ENCODE measurements at regions of chr2 and their contacts with region 1.

Region 1: GRCh38 chr2:54570925-54571694 is 115.0 kb downstream of the SPTBN1 start:
- DNase-seq: peak; percentile 83
- ATAC-seq: peak; percentile 42
- H3K4me3 ChIP-seq: peak overlapping the region in 3 of 5 experiments; percentile 1 to 56 (median 32)
- H3K4me3 Mint-ChIP-seq: peak overlapping the region; percentile 83
- H3K27ac ChIP-seq: peak overlapping the region; percentile 92 to 93
- H3K27ac Mint-ChIP-seq: peak overlapping the region; percentile 97
- H3K4me1 ChIP-seq: peaks cover 92 to 93% of the 10 kb centered on the region in 2 donors
- H3K4me1 Mint-ChIP-seq: peaks cover 92% of the 10 kb centered on the region
- H3K27me3 ChIP-seq: no peaks in the 10 kb centered on the region
- H3K27me3 Mint-ChIP-seq: no peaks in the 10 kb centered on the region
- CTCF ChIP-seq: no peak

Region 2: GRCh38 chr2:54589340-54590215 is 18.5 kb after region 1 on chr2:
- CTCF ChIA-PET with region 1: interaction called, 4 read pairs
- POLR2A ChIA-PET with region 1: interaction called, 5 read pairs
- intact Hi-C with region 1: loop called (anchors 2 kb)
- DNase-seq: no peak
- ATAC-seq: peak; percentile 57
- H3K4me3 ChIP-seq: peak overlapping the region in 3 of 5 experiments; percentile 15 to 38 (median 16)
- H3K4me3 Mint-ChIP-seq: peak overlapping the region; percentile 69
- H3K27ac ChIP-seq: peak overlapping the region; percentile 59 to 67
- H3K27ac Mint-ChIP-seq: peak overlapping the region; percentile 88
- H3K4me1 ChIP-seq: peaks cover 87% of the 10 kb centered on the region in 2 donors
- H3K4me1 Mint-ChIP-seq: peaks cover 94% of the 10 kb centered on the region
- H3K27me3 ChIP-seq: no peaks in the 10 kb centered on the region
- H3K27me3 Mint-ChIP-seq: no peaks in the 10 kb centered on the region
- CTCF ChIP-seq: no peak

Region 3: DNA sequence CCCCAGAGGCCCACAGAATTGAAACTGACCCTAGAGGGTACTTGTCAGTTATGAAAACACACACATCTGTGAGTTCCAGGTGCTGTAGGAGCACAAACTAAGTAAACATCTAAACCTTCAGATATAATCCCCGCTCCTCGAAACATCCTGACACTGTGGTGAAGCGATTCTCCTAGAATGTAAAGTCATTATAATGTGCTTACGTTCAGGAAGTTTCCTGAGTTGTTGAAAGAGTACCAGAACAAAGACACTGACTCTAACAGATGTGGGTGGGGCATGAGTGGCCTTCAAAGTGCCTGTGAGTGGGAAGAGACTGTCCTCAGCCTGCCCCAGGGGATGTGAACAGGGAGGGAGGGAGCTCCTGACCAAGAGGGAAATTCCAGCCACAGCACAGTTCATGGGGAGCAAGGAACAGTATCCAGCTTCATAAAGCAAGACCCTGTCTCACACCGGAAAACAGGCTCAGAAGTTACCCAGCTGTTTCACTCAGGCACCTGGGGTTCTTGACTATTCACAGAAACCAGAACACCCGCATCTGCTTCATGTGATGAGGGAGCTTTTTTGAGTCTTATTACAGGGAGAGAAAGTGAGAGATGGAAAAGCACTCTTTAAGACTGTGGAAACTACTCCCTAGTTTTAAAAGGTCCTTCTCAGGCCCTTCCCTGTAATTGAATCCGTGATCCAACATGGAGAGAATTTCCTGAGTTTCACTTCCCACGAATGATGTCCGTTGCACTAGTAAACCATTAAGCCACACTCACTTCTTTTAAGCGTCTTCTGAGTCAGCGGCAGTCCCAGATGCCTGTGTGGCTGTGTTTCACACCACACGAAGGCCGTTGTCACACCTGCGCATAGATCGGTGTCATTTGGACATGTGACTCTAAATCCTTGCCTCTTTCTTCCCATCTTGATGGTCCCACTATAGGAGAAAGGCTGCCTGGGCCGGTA is 63.7 kb after region 1 on chr2:
- CTCF ChIA-PET with region 1: interaction called, 7 read pairs
- POLR2A ChIA-PET with region 1: no interaction called
- intact Hi-C with region 1: loop called (anchors 2 kb)
- DNase-seq: peak; percentile 68
- ATAC-seq: peak; percentile 65
- H3K4me3 ChIP-seq: no peak overlapping the region
- H3K4me3 Mint-ChIP-seq: peak overlapping the region; percentile 67
- H3K27ac ChIP-seq: peak overlapping the region; percentile 46 to 85
- H3K27ac Mint-ChIP-seq: peak overlapping the region; percentile 94
- H3K4me1 ChIP-seq: peaks cover 35 to 42% of the 10 kb centered on the region in 2 donors
- H3K4me1 Mint-ChIP-seq: peaks cover 60% of the 10 kb centered on the region
- H3K27me3 ChIP-seq: no peaks in the 10 kb centered on the region
- H3K27me3 Mint-ChIP-seq: no peaks in the 10 kb centered on the region
- CTCF ChIP-seq: no peak

Region 4: DNA sequence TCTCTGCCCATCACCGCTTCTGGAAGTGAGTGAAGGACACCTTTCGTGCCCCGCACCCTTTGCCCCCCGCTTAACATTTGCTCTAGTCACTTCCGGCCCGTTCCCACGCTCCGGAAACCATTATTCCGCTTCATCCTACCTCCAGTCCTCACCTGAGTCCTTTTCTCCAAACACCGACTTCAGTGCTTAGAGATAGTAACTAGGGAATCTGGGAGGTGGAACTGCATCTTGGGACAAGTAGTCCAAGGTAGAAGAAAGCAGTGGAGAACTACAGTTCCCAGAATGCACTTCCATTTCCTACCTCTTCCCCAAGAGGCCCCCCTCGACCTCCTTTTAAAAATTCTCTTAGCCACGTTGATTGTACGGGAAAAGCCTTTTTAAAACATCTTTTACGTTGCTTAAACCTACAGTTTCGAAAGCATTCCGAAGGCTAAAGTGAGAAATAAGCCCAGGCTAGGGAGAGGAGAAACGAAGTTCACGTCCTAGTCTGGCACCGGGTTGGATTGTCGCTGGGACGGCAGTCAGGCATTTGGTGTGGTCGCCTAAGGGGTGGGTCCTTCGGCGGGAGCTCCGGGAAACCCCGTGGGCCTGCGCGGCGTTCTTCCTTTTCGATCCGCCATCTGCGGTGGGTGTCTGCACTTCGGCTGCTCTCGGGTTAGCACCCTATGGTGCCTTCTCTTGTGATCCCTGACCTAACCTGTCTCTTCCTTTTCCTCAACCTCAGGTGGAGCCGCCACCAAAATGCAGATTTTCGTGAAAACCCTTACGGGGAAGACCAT is 661.2 kb after region 1 on chr2 and contains the starts of genes CLHC1 and RPS27A:
- CTCF ChIA-PET with region 1: no interaction called
- POLR2A ChIA-PET with region 1: no interaction called
- intact Hi-C with region 1: loop called (anchors 5 kb)
- DNase-seq: peak; percentile 97
- ATAC-seq: peak; percentile 87
- H3K4me3 ChIP-seq: peak within 1 kb of the TSS; percentile 72 to 98 (median 94)
- H3K4me3 Mint-ChIP-seq: peak within 1 kb of the TSS; percentile 94
- H3K27ac ChIP-seq: peak within 1 kb of the TSS; percentile 95 to 98
- H3K27ac Mint-ChIP-seq: peak within 1 kb of the TSS; percentile 99
- H3K4me1 ChIP-seq: peaks cover 28 to 39% of the 10 kb centered on the region in 2 donors
- H3K4me1 Mint-ChIP-seq: peaks cover 54% of the 10 kb centered on the region
- H3K27me3 ChIP-seq: no peaks in the 10 kb centered on the region
- H3K27me3 Mint-ChIP-seq: no peaks in the 10 kb centered on the region
- CTCF ChIP-seq: no peak
- total RNA-seq, gene CLHC1: 12.0 and 12.8 TPM in 2 replicates
- total RNA-seq, gene RPS27A: 1,561 and 1,678 TPM in 2 replicates

Measured in B cell (primary cell).